ENCODE measurements at regions of chr18 and their contacts with region 1.

Region 1: GRCh38 chr18:35386600-35387351 is 9.6 kb upstream of the ZNF396 start:
- DNase-seq: peak; percentile 69 to 73 (median 73)
- H3K4me3 ChIP-seq: no peak overlapping the region
- H3K4me3 Mint-ChIP-seq: peak overlapping the region in 2 of 8 donors; percentile 29 to 65
- H3K27ac ChIP-seq: no peak overlapping the region
- H3K27ac Mint-ChIP-seq: peak overlapping the region in 2 of 7 donors; percentile 6 to 32
- H3K4me1 ChIP-seq: peaks cover 5% of the 10 kb centered on the region
- H3K4me1 Mint-ChIP-seq: peaks cover 0 to 4% (median 2%) of the 10 kb centered on the region in 4 donors
- H3K27me3 ChIP-seq: peaks cover 5% of the 10 kb centered on the region
- H3K27me3 Mint-ChIP-seq: peaks cover 8 to 25% of the 10 kb centered on the region in 2 donors

Region 2: GRCh38 chr18:34467058-34467457 is 919.7 kb before region 1 on chr18:
- CTCF ChIA-PET with region 1: no interaction called
- POLR2A ChIA-PET with region 1: no interaction called
- intact Hi-C with region 1: no loop called
- DNase-seq: no peak
- H3K4me3 ChIP-seq: no peak overlapping the region
- H3K4me3 Mint-ChIP-seq: no peak overlapping the region
- H3K27ac ChIP-seq: no peak overlapping the region
- H3K27ac Mint-ChIP-seq: no peak overlapping the region
- H3K4me1 ChIP-seq: no peaks in the 10 kb centered on the region
- H3K4me1 Mint-ChIP-seq: no peaks in the 10 kb centered on the region
- H3K27me3 ChIP-seq: no peaks in the 10 kb centered on the region
- H3K27me3 Mint-ChIP-seq: no peaks in the 10 kb centered on the region

Region 3: GRCh38 chr18:35071819-35072247 is 314.9 kb before region 1 on chr18:
- CTCF ChIA-PET with region 1: no interaction called
- POLR2A ChIA-PET with region 1: no interaction called
- intact Hi-C with region 1: no loop called
- DNase-seq: no peak
- H3K4me3 ChIP-seq: no peak overlapping the region
- H3K4me3 Mint-ChIP-seq: no peak overlapping the region
- H3K27ac ChIP-seq: no peak overlapping the region
- H3K27ac Mint-ChIP-seq: peak overlapping the region in 3 of 7 donors; percentile 27 to 63 (median 43)
- H3K4me1 ChIP-seq: no peaks in the 10 kb centered on the region
- H3K4me1 Mint-ChIP-seq: peaks cover 22 to 53% (median 33%) of the 10 kb centered on the region in 4 donors
- H3K27me3 ChIP-seq: no peaks in the 10 kb centered on the region
- H3K27me3 Mint-ChIP-seq: no peaks in the 10 kb centered on the region

Region 4: DNA sequence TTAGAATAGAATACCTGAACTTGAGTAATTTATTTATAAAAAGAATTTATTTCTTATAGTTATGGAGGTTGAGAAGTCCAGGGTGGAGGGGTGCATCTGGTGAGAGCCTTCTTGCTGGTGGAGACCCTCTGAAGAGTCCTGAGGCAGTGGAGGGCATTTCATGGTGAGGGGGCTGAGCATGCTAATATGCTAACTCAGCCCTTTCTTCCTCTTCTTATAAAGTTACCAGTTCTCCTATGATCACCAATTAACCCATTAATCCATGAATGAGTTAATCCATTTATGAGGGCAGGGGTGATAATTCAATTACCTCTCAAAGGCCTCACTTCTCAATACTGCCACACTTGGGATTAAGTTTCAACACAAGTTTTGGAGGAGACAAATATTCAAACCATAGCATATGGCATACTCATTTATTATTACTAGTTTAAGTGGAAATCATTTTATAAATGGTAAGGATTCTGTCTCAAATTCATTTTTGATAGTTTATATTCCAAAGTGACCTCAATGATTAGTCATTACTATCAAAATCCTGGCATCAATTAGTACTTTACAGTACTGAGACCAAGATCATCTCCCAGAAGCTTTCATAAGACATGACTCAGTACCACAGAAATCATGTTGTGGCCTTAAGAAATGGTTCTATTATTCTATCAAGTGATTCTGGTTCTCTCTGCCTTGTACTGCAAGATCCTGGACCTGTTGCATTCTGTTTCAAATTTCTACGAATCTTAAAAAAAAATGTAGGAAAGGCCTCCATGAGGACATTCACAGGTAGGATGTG is 15.2 kb before region 1 on chr18:
- CTCF ChIA-PET with region 1: interaction called, 26 read pairs
- POLR2A ChIA-PET with region 1: interaction called, 3 read pairs
- intact Hi-C with region 1: no loop called
- DNase-seq: no peak
- H3K4me3 ChIP-seq: no peak overlapping the region
- H3K4me3 Mint-ChIP-seq: no peak overlapping the region
- H3K27ac ChIP-seq: no peak overlapping the region
- H3K27ac Mint-ChIP-seq: no peak overlapping the region
- H3K4me1 ChIP-seq: peaks cover 6% of the 10 kb centered on the region
- H3K4me1 Mint-ChIP-seq: peaks cover 0 to 6% (median 2%) of the 10 kb centered on the region in 4 donors
- H3K27me3 ChIP-seq: no peaks in the 10 kb centered on the region
- H3K27me3 Mint-ChIP-seq: no peaks in the 10 kb centered on the region

Region 5: DNA sequence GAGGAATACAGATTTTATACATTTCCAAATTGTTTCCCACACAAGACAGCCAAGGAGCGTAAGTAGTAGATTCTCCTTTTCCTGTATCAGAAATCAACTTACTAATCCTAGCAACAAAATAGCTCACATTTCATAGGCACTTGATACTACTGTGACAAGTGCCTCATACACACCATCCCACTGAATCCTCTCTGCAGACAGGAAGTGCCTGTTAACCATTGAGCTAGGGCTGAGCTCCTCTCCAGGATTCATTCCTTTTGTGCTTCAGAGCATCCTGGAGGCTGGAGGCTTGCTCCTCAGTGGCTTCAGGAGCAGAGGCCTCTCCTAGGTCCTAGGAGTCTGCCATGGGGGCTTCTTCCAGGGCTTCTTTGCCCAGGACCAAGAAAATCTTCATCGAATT is 11.2 kb after region 1 on chr18:
- CTCF ChIA-PET with region 1: interaction called, 35 read pairs
- POLR2A ChIA-PET with region 1: no interaction called
- intact Hi-C with region 1: no loop called
- DNase-seq: no peak
- H3K4me3 ChIP-seq: no peak overlapping the region
- H3K4me3 Mint-ChIP-seq: no peak overlapping the region
- H3K27ac ChIP-seq: no peak overlapping the region
- H3K27ac Mint-ChIP-seq: no peak overlapping the region
- H3K4me1 ChIP-seq: no peaks in the 10 kb centered on the region
- H3K4me1 Mint-ChIP-seq: no peaks in the 10 kb centered on the region
- H3K27me3 ChIP-seq: peaks cover 5% of the 10 kb centered on the region
- H3K27me3 Mint-ChIP-seq: peaks cover 14 to 19% of the 10 kb centered on the region in 2 donors

Region 6: GRCh38 chr18:35605686-35606417 is 219.1 kb after region 1 on chr18:
- CTCF ChIA-PET with region 1: no interaction called
- POLR2A ChIA-PET with region 1: no interaction called
- intact Hi-C with region 1: no loop called
- DNase-seq: no peak
- H3K4me3 ChIP-seq: no peak overlapping the region
- H3K4me3 Mint-ChIP-seq: no peak overlapping the region
- H3K27ac ChIP-seq: no peak overlapping the region
- H3K27ac Mint-ChIP-seq: no peak overlapping the region
- H3K4me1 ChIP-seq: no peaks in the 10 kb centered on the region
- H3K4me1 Mint-ChIP-seq: peaks cover 18 to 44% (median 34%) of the 10 kb centered on the region in 4 donors
- H3K27me3 ChIP-seq: no peaks in the 10 kb centered on the region
- H3K27me3 Mint-ChIP-seq: no peaks in the 10 kb centered on the region

Measured in CD4-positive, alpha-beta memory T cell (primary cell).